ENCODE measurements at regions of chr9 and their contacts with region 1.

Region 1: GRCh38 chr9:33816327-33817252 is at the start of gene UBE2R2:
- DNase-seq: peak; percentile 86 to 98 (median 91)
- ATAC-seq: peak; percentile 79
- H3K4me3 ChIP-seq: peak within 1 kb of the TSS; percentile 85 to 93
- H3K4me3 Mint-ChIP-seq: peak within 1 kb of the TSS; percentile 89
- H3K27ac ChIP-seq: peak within 1 kb of the TSS; percentile 92 to 94
- H3K27ac Mint-ChIP-seq: peak within 1 kb of the TSS; percentile 98
- H3K4me1 ChIP-seq: peaks cover 23% of the 10 kb centered on the region
- H3K4me1 Mint-ChIP-seq: peaks cover 50% of the 10 kb centered on the region
- H3K27me3 ChIP-seq: no peaks in the 10 kb centered on the region
- H3K27me3 Mint-ChIP-seq: no peaks in the 10 kb centered on the region
- CTCF ChIP-seq: no peak
- total RNA-seq, gene UBE2R2: 20.0 to 20.1 TPM

Region 2: DNA sequence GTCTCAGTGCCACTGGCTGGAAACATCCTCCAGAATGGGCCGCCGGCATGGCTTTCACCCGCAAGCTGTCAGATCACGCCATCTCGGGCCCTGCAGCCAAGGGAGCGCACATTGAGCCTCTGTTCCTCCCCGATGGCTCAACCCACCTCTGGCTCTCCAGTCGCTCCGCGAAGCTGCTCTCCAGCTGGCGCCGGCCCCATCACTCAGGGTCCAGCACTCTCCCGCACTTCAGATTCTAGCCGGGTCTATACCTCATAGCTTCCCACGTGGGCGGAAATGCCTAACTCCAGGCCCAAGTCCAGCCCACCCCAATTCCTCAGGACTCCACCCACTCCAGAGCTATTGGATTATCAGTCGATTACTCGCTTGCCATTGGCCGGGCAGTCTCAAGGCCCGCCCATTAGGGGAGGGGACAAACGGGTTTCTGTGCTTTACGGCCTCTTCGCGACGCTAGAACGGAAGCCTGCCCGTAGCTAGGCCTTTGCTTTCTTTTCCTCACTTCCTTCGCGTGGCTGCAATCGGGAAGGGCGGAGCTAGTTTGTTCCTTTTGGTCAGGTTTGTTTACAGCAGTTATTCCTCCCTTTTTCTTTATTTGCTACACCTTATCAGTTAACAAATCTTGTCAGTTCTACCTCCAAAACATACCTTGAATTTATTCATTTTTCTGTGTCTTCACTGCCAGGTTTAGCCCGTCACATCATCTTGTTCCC is 342.8 kb before region 1 on chr9 and contains the start of gene NOL6:
- CTCF ChIA-PET with region 1: interaction called, 3 read pairs
- POLR2A ChIA-PET with region 1: interaction called, 4 read pairs
- intact Hi-C with region 1: loop called in 1 of 2 experiments (anchors 10 kb)
- DNase-seq: peak; percentile 97 to 99 (median 98)
- ATAC-seq: peak; percentile 99
- H3K4me3 ChIP-seq: peak within 1 kb of the TSS; percentile 91 to 94
- H3K4me3 Mint-ChIP-seq: peak within 1 kb of the TSS; percentile 99
- H3K27ac ChIP-seq: peak within 1 kb of the TSS; percentile 76 to 80
- H3K27ac Mint-ChIP-seq: peak within 1 kb of the TSS; percentile 96
- H3K4me1 ChIP-seq: peaks cover 22% of the 10 kb centered on the region
- H3K4me1 Mint-ChIP-seq: peaks cover 32% of the 10 kb centered on the region
- H3K27me3 ChIP-seq: no peaks in the 10 kb centered on the region
- H3K27me3 Mint-ChIP-seq: no peaks in the 10 kb centered on the region
- CTCF ChIP-seq: no peak
- total RNA-seq, gene NOL6: 41.8 to 42.3 TPM

Region 3: GRCh38 chr9:33884856-33885701 is 68.5 kb after region 1 on chr9:
- CTCF ChIA-PET with region 1: interaction called, 12 read pairs
- POLR2A ChIA-PET with region 1: no interaction called
- intact Hi-C with region 1: no loop called
- DNase-seq: no peak
- ATAC-seq: no peak
- H3K4me3 ChIP-seq: no peak overlapping the region
- H3K4me3 Mint-ChIP-seq: no peak overlapping the region
- H3K27ac ChIP-seq: no peak overlapping the region
- H3K27ac Mint-ChIP-seq: peak overlapping the region; percentile 37
- H3K4me1 ChIP-seq: peaks cover under 1% of the 10 kb centered on the region
- H3K4me1 Mint-ChIP-seq: peaks cover 42% of the 10 kb centered on the region
- H3K27me3 ChIP-seq: no peaks in the 10 kb centered on the region
- H3K27me3 Mint-ChIP-seq: no peaks in the 10 kb centered on the region
- CTCF ChIP-seq: no peak

Region 4: DNA sequence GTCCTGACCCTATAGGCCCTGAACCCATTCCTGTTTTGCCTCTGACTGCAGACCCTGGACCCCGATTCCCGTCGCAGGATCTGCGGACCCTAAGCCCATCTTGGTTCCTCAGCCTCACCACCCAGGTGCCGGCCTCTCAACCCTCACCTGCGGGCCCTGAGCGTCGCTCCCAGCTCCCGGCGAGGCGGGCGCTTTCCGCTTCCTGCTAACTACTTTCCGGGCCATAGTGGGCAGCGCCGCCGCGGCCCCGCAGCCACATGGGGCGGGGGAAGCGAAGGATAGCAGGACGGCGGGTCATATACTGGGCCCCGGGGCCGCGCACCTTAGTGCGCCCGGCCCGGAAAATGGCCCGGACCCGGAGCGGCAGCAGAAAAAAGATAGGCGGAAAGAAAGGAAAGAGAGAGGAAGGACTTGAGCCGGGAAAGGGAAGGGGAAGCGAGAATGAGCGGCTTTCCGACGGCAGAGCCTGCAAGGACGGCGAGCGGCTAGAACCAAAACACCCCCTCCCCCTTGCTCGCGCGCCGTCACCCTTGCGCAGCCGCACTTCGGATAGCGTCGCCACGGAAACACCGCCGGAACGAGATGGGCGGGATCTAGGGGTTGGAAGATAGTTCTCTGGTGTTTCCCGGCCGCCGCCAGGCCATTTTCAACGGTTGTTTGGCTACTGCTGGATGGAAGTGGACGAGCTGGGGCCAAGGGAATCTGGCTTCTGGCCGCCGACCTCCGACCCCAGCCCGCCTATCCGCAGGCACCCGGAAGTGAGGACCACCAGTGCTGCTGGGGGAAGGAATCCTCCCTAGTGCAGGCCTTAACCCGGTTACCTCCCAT is 309.8 kb after region 1 on chr9 and contains the start of gene DCAF12:
- CTCF ChIA-PET with region 1: no interaction called
- POLR2A ChIA-PET with region 1: no interaction called
- intact Hi-C with region 1: loop called in 1 of 2 experiments (anchors 5 kb)
- DNase-seq: peak; percentile 82 to 96 (median 90)
- ATAC-seq: peak; percentile 96
- H3K4me3 ChIP-seq: peak within 1 kb of the TSS; percentile 89 to 96
- H3K4me3 Mint-ChIP-seq: peak within 1 kb of the TSS; percentile 98
- H3K27ac ChIP-seq: peak within 1 kb of the TSS; percentile 79 to 92
- H3K27ac Mint-ChIP-seq: peak within 1 kb of the TSS; percentile 97
- H3K4me1 ChIP-seq: peaks cover 39% of the 10 kb centered on the region
- H3K4me1 Mint-ChIP-seq: peaks cover 49% of the 10 kb centered on the region
- H3K27me3 ChIP-seq: no peaks in the 10 kb centered on the region
- H3K27me3 Mint-ChIP-seq: no peaks in the 10 kb centered on the region
- CTCF ChIP-seq: no peak
- total RNA-seq, gene DCAF12: 4.0 to 4.1 TPM

Region 5: GRCh38 chr9:34328987-34329832 is 512.6 kb after region 1 on chr9 and contains the starts of genes KIF24 and NUDT2:
- CTCF ChIA-PET with region 1: no interaction called
- POLR2A ChIA-PET with region 1: no interaction called
- intact Hi-C with region 1: loop called in 1 of 2 experiments (anchors 5 kb)
- DNase-seq: peak; percentile 86 to 100 (median 93)
- ATAC-seq: peak; percentile 91
- H3K4me3 ChIP-seq: peak within 1 kb of the TSS; percentile 95 to 96
- H3K4me3 Mint-ChIP-seq: peak within 1 kb of the TSS; percentile 90
- H3K27ac ChIP-seq: peak within 1 kb of the TSS; percentile 92 to 93
- H3K27ac Mint-ChIP-seq: peak within 1 kb of the TSS; percentile 92
- H3K4me1 ChIP-seq: no peaks in the 10 kb centered on the region
- H3K4me1 Mint-ChIP-seq: peaks cover 23% of the 10 kb centered on the region
- H3K27me3 ChIP-seq: no peaks in the 10 kb centered on the region
- H3K27me3 Mint-ChIP-seq: no peaks in the 10 kb centered on the region
- CTCF ChIP-seq: no peak
- total RNA-seq, gene KIF24: 0.08 to 0.14 TPM
- total RNA-seq, gene NUDT2: 9.7 to 10.2 TPM